ENCODE measurements at regions of chr1 and their contacts with region 1.

Region 1: DNA sequence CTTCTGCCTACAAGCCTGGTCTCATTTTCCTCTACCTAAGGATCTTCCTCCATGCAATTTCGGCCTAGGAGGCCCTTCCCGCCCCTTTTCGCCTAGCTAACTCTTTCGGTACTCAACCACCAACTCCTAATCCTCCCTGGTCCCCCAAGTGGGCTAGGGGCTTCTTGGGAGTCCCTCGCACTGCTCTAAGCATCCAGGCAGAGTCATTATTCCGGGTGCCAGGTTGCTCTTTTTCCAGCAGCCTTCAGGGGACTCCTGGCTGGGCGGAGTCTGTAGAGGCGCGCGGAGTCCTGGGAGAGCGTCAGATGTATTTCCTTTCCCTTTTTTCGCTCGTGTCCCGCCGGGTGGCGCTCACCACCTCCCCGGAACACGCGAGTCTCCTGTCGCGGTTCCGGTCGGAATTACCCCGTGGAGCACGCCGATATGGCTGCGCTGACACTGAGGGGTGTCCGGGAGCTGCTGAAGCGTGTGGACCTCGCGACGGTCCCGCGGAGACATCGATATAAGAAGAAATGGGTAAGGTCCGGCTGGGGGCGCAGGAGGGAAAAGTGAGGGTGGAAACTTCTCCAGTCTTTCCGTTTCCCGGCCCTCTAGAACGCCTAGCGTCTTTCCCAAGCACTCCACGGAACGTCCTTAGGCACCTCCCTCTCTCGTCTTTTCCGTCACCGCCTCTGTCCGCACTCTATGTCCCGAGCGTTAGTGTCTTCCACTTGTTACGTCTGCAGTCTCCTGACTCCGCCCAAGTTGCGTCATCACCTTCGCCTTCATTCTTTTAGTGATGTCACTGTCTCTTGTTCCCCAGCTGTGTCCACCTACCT is at the start of gene NSUN4:
- DNase-seq: peak; percentile 95
- H3K4me3 ChIP-seq: peak within 1 kb of the TSS; percentile 57
- H3K27ac ChIP-seq: peak within 1 kb of the TSS; percentile 99
- H3K4me1 ChIP-seq: peaks cover 4% of the 10 kb centered on the region
- H3K27me3 ChIP-seq: no peaks in the 10 kb centered on the region
- CTCF ChIP-seq: peak; percentile 34
- total RNA-seq, gene NSUN4: 18.3 to 19.0 TPM

Region 2: DNA sequence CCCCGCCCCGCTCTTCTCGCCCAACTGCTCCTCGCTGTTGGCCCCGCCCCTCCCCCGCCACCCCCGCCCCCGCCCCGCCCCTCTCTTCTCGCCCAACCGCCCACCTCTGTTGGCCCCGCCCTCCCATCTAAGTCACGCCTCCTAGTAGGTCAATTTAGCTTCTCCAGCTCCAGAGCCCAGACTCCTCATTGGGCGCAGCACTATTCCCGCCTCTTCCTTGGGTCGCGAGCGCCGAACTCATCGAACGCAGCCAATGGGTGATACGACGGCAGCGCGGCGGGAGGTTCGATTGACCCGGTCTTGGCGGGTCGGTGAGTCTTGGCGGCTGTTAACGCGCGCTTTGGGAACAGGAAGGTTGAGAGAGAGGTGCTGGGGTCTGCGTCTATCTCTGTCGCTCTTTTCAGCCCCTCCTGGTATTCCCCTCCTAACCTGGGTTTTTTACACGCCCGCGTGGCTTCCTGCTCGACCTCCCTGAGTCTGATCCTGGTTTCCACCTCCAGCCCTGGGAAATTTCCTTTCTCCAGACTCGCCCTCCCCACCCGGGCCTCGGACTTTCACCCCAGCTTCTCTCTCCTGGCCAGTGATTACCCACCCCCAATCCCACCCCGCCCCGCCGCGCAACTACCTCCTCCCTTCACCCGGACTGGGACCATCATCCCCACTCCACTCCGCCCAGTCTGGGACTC is 93.0 kb before region 1 on chr1 and contains the start of gene RAD54L:
- intact Hi-C with region 1: loop called (anchors 10 kb)
- DNase-seq: peak; percentile 99
- H3K4me3 ChIP-seq: peak within 1 kb of the TSS; percentile 66
- H3K27ac ChIP-seq: peak within 1 kb of the TSS; percentile 61
- H3K4me1 ChIP-seq: no peaks in the 10 kb centered on the region
- H3K27me3 ChIP-seq: no peaks in the 10 kb centered on the region
- CTCF ChIP-seq: no peak
- total RNA-seq, gene RAD54L: 5.9 to 27.5 TPM